Lower leg skin (tissue), 4 donors: ENCODE measurements at regions of chr4 and their contacts with region 1.

Region 1: DNA sequence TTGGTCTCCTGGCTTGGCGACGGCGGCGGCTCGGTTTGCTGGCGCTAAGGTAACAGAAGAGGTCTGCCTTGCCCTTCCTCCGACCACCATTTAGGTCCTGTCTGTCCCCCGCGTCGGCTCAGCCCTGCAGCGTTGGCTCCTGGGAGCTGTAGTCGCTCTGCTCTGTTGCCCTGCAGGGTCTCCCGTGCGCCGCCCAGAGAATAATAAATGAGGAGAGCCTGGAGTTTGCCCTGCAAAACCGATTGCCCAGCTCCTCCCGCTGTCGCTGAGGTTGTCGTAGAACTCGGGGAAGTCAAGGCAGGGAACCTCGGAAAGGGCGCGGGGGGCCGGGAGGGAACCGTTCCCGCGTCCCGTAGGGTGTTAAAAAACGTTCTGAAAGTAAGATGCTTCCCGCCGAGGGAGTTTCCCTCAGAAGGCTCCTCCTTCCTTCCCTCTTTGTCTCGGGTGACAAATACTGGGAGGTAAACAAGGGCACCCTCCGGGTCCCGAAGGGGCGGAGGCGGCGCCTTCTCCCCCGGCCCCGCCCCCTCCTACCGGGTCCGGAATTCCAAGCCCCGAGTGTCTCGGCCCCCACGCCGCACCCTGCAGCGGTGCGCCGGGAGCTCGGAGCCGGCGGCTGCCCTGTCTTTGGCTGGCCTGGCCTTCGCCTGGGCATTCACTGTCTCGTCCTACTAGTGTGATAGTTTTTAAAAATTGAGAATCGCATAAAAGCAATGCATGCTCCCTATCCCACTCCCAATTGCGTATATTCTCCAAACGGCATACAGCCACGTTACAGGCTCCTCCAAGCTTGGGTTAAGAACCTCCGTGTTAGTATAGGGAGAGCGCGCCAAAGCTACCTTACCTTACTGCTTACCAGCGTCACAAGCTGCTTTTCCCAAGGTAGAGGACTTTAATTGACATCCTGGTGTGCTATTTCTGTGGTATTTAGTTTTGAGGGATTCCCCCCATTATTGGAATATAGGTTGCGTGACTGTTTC is 905 bp upstream of the HMGB2 start:
- DNase-seq: peak; percentile 69 to 90
- H3K4me3 ChIP-seq: peak overlapping the region; percentile 88
- CTCF ChIP-seq: no peak
- POLR2A ChIP-seq: no peak

Region 2: DNA sequence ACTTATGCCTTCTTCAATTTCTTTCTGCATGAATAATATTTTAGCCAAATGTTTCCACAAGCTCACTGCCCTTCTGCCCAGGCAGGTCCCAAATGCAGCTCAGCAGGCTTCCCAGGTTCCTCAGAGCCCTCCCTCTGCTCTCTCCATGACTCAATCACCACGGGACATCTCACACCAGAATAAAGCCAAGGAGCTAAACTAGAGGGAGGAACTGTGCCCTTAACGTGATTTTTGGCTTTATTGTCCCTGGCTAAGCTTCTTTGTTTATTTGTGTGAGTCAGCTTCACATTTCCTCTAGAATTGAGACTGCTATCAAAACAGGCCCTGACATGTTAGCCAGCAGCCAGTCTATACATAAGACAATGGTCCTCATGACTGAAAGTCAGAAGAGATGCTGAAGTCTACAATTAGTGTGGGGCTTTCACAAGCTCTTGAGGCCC is 352.9 kb before region 1 on chr4:
- intact Hi-C with region 1: no loop called
- DNase-seq: peak in 1 of 2 donors; percentile 42
- H3K4me3 ChIP-seq: no peak overlapping the region
- CTCF ChIP-seq: no peak
- POLR2A ChIP-seq: no peak

Region 3: GRCh38 chr4:173370477-173371291 is 35.6 kb after region 1 on chr4 and contains the start of gene SAP30:
- intact Hi-C with region 1: loop called (anchors 5 kb)
- DNase-seq: peak; percentile 98 to 100
- H3K4me3 ChIP-seq: peak within 1 kb of the TSS; percentile 82
- CTCF ChIP-seq: no peak
- POLR2A ChIP-seq: peak in 1 of 2 donors; percentile 92
- total RNA-seq, gene SAP30: 14.4 to 25.1 (median 18.3) TPM

Region 4: GRCh38 chr4:173685165-173685830 is 350.2 kb after region 1 on chr4:
- intact Hi-C with region 1: no loop called
- DNase-seq: no peak
- H3K4me3 ChIP-seq: no peak overlapping the region
- CTCF ChIP-seq: no peak
- POLR2A ChIP-seq: no peak